Left cardiac atrium (tissue), 4 donors: ENCODE measurements at regions of chr2 and their contacts with region 1.

Region 1: GRCh38 chr2:54455563-54456361 is at the start of gene SPTBN1:
- DNase-seq: peak; percentile 92
- ATAC-seq: peak; percentile 90 to 95
- total RNA-seq, gene SPTBN1: 329 to 332 TPM

Region 2: DNA sequence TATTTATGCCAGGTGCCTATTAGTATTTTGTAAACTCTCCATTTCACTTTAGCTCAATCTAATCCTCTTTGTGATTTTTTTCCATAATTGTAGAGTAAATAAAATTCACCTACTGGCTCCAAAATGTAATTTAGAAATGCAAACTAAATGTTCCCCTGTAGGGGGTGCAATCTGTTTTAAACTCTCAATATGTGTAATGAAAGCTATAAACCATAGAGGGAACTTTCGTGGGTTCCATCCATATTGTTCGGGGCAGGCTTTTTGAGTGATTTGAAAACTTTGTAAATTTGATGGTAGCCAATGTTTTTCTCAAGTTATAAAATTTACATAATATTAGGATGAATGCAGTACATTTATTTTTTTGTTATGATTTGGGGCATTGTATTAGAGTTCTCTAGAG is 249.2 kb before region 1 on chr2:
- intact Hi-C with region 1: loop called in 1 of 2 experiments (anchors 10 kb)
- DNase-seq: no peak
- ATAC-seq: peak in 1 of 2 donors; percentile 40

Region 3: DNA sequence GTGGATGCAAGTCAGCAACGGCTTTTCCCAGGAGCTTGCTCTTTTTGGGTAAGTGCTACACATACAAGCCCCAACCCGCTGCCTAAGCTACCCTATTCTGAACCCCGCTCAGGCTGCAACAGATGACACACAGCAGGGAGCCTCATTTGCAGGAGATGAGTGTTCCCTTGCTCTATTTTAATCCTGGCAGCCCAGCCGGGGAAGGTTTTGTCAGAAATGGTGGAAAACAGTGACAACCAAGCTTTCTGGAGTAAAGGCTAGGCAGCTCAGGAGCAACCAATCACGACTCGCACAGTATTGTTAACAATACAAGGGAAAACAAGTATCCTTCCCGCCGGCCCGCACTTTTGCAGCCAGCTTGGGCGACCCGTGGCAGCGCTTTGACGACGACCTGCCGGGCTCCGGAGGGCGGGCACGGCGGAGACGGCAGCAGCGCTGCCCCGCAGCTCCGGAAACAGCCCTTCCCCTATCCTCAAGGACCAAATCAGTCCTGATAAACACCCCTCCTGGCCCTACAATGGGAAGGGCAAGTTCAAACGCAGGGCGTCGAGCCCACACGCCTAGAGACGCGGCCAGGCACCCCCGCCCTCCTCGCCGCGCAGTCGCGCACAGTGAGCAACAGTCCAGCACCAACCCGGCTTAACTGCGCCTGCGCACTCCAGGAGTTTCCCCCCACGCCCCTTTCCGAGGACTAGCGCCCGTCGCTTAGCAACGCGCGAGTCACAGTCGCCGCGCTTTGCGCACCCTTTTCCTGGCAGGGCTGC is 125.4 kb before region 1 on chr2:
- intact Hi-C with region 1: loop called in 1 of 2 experiments (anchors 10 kb)
- DNase-seq: peak; percentile 99
- ATAC-seq: peak; percentile 98 to 99

Region 4: DNA sequence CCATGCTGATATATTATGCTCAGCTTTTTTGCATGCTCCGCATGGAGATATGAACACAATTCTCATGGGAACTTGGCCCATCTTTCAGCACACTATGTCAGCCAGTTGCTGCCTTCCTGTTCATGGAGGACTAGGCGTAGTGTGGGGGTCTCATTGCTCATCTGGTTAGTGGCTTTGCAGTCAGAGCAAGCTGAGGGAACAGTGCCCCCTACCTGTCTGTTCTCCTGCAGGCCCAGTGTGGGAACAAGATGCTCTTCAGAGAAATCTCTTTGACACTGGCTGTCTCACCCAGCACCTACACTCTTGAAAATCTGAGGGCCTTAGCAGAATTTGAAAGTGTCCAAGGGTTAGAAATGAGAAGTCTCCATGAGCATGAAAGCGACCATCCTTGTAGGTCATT is 47.4 kb after region 1 on chr2:
- intact Hi-C with region 1: no loop called
- DNase-seq: no peak
- ATAC-seq: peak in 1 of 2 donors; percentile 31